Dendritic cell treated with granulocyte-macrophage colony-stimulating factor and Interleukin-4, amounts not matched to agents 40 ng/mL and 50 ng/mL, for 4 days (primary cell): ENCODE measurements at regions of chr18 and their contacts with region 1.

Region 1: GRCh38 chr18:12589448-12589847 is 68.5 kb downstream of the SPIRE1 start:
- H3K4me3 Mint-ChIP-seq: no peak overlapping the region
- H3K27ac Mint-ChIP-seq: no peak overlapping the region
- H3K4me1 Mint-ChIP-seq: no peaks in the 10 kb centered on the region
- H3K27me3 Mint-ChIP-seq: no peaks in the 10 kb centered on the region

Region 2: GRCh38 chr18:12543697-12544096 is 45.8 kb before region 1 on chr18:
- intact Hi-C with region 1: no loop called
- H3K4me3 Mint-ChIP-seq: no peak overlapping the region
- H3K27ac Mint-ChIP-seq: no peak overlapping the region
- H3K4me1 Mint-ChIP-seq: peaks cover 16% of the 10 kb centered on the region
- H3K27me3 Mint-ChIP-seq: no peaks in the 10 kb centered on the region

Region 3: GRCh38 chr18:12639990-12640880 is 50.8 kb after region 1 on chr18:
- intact Hi-C with region 1: loop called (anchors 10 kb)
- H3K4me3 Mint-ChIP-seq: no peak overlapping the region
- H3K27ac Mint-ChIP-seq: peak overlapping the region; percentile 10
- H3K4me1 Mint-ChIP-seq: peaks cover 12% of the 10 kb centered on the region
- H3K27me3 Mint-ChIP-seq: no peaks in the 10 kb centered on the region

Region 4: GRCh38 chr18:12883684-12884405 is 294.4 kb after region 1 on chr18 and contains the start of gene PTPN2:
- intact Hi-C with region 1: no loop called
- H3K4me3 Mint-ChIP-seq: peak within 1 kb of the TSS; percentile 90
- H3K27ac Mint-ChIP-seq: peak within 1 kb of the TSS; percentile 89
- H3K4me1 Mint-ChIP-seq: peaks cover 40% of the 10 kb centered on the region
- H3K27me3 Mint-ChIP-seq: no peaks in the 10 kb centered on the region